Activated CD4-positive, alpha-beta memory T cell treated with anti-CD3 and anti-CD28 coated beads for 36 hours (primary cell): ENCODE measurements at regions of chr1 and their contacts with region 1.

Region 1: DNA sequence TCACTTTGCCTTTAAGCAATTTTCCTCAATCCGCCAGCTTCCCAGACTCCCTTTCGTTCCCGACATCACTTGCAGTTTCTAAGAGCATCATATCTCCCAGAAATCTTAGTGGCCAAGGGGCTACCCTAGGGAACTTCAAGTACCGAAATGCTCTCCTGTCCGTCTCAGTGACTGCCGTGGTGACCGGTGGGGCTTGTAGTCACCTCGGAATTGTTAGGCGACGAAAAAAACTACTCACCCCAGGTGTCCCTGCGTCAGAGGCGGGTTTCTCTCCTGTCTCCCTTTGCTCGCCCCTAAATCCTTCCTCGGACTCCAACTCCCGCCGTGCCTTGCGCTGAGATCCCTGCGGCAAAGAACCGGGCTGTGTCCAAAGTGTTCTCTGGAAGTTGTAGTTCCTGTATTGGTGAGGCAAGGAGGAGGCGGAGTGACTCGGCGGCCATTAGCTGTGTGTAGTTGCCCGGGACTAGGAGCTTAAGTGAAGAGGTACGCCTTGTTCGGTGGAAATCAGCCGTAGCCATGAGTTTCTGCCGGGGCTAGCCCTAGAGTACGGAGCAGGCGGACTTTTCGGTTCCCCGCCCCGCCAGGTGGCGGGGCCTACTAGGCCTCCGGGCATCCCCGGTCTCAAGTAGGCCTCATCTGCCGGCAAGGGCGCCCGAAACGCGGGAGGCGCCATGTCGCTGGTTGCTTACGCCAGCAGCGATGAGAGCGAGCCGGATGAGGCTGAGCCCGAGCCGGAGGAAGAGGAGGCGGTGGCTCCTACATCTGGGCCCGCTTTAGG is at the start of gene PRCC:
- DNase-seq: peak; percentile 99
- H3K4me3 Mint-ChIP-seq: no peak within 1 kb of the TSS
- H3K27ac Mint-ChIP-seq: no peak within 1 kb of the TSS
- H3K4me1 Mint-ChIP-seq: peaks cover 36% of the 10 kb centered on the region
- H3K27me3 Mint-ChIP-seq: no peaks in the 10 kb centered on the region
- total RNA-seq, gene PRCC: 58.6 to 67.2 TPM

Region 2: DNA sequence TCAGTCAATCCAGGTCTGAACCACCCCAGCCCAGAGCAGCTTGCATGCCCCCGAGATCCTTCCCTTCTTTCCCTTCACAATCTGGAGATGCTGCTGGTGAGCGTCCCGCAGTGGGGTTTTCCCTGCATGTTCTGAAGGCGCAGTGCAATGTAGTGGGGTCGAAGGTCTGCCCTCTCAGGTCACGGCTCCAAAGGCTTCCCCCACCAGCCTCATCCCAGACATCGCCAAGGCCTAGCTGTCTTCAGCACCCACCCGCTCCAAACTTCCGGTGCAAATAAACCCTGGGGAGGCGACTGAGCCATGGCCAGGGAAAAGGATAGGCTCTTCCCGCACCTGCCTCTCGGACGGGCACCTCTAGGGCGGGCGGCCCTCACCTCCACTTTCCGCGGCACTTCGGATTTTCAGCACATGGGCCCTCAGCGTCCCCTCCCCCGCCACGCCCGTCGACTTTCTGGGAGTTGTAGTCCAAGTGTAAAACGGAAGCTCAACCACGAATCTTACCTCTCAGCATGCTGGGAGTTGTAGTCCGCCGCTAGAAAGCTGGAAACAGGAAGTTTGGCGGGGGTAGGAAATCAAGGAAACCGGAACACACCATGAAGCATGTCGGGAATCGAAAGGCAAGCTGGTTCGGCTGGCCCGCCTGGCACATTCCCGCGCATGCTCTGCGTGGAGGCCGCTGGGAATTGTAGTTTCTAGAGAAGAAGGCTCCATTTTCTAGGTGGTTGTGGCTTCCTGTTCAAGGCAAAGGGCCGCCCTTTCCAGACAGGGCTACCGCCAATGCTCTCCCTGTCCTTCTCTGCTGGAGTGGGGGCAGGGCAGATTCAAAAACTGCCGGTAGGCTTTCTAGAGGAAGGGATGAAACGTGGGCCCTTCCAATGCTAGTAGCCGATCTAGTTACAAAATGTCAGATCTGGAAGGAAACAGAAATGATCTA is 26.3 kb before region 1 on chr1 and contains the start of gene MRPL24:
- CTCF ChIA-PET with region 1: interaction called, 9 read pairs
- POLR2A ChIA-PET with region 1: interaction called, 27 read pairs
- intact Hi-C with region 1: loop called (anchors 1 kb)
- DNase-seq: peak; percentile 98
- H3K4me3 Mint-ChIP-seq: peak within 1 kb of the TSS; percentile 89
- H3K27ac Mint-ChIP-seq: peak within 1 kb of the TSS; percentile 95
- H3K4me1 Mint-ChIP-seq: peaks cover 47% of the 10 kb centered on the region
- H3K27me3 Mint-ChIP-seq: no peaks in the 10 kb centered on the region
- total RNA-seq, gene MRPL24: 105 to 106 TPM

Region 3: DNA sequence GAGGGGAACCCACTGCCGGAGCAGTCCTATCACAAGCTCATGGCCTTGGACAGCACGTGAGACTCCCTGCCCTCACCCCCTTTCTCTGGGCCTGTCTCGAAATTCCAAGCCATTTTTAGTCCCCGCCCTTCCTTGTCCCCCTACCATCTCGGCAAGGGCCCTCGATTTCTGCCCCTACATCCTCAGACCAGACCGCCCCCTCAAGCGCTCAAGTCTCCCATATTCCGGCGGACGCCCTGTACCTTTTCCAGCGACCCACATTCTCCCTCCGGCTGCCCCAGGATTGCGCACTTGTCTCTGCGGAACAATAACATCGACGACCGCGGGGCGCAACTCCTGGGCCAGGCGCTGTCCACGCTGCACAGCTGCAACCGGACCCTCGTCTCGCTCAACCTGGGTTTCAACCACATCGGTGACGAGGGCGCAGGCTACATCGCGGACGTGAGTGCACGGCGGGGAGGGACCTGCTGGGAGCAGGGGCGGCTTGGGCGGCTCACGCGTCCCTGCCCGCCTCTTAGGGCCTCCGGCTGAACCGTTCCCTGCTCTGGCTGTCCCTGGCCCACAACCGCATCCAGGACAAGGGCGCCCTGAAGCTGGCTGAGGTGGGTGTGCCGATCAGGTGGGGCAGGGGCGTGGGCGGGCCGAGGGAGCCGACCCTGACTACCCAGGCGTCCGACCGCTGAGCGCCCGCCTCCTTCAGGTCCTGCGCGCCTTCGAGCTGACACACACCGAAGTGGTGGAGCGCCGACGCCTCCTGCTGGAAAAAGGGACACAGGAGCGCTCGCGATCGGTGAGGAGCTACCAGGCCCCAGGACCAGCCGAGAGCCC is 160.1 kb after region 1 on chr1:
- CTCF ChIA-PET with region 1: no interaction called
- POLR2A ChIA-PET with region 1: no interaction called
- intact Hi-C with region 1: no loop called
- DNase-seq: peak; percentile 79
- H3K4me3 Mint-ChIP-seq: no peak overlapping the region
- H3K27ac Mint-ChIP-seq: no peak overlapping the region
- H3K4me1 Mint-ChIP-seq: peaks cover 16% of the 10 kb centered on the region
- H3K27me3 Mint-ChIP-seq: peaks cover 75% of the 10 kb centered on the region